HEK293 (cell line): ENCODE measurements at regions of chr17 and their contacts with region 1.

Region 1: DNA sequence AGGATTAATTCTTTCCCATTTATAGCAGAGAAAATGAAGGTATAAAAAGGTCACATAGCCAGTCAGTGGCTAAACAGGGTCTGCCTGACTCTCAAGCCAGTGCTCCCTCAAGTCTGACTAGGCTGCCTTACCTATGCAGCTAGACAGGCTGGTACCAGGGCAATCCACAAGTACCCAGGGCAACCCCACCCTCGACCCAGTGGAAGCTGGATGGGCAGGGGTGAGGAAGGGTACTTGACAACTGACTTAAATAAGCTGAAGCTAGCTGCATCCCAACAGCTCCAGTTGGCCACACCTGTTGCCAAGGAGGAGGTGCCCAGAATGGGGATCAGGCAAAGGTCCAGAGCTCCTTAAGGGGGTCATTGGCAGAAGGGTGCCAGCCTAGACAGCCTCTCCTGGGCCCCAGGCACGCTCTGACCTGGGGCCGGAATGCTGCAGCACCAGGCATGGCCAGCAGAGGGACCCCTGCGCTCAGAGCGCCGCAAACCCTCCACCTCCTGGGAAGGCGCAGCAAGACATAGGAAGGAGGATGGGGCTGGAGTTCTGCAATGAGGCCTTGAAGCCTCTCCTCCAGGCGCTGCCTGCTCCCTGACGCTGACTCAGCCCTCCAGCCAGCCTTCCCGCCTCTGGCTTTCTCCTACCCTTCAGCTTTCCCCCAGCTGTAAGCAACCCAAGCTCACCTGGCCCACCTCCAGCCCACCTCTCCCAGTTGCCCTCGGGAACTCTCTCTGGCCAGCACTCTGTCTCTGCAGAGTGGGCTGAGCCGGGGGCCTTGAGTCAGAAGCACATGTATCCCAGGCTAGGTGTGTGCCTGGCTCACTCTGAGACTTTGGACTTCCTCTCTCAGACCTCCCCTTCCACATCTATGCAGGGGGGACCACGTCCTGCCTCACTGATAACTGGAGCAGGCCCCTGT is 28.8 kb downstream of the MPP2 start:
- H3K4me3 ChIP-seq: no peak overlapping the region
- H3K27ac ChIP-seq: no peak overlapping the region
- H3K4me1 ChIP-seq: no peaks in the 10 kb centered on the region; the same call in 1 of the 2 replicates
- CTCF ChIP-seq: peak; percentile 98

Region 2: GRCh38 chr17:43861024-43861621 is 17.4 kb before region 1 on chr17:
- CTCF ChIA-PET with region 1: interaction called, 37 read pairs
- POLR2A ChIA-PET with region 1: interaction called, 3 read pairs
- H3K4me3 ChIP-seq: no peak overlapping the region
- H3K27ac ChIP-seq: no peak overlapping the region
- H3K4me1 ChIP-seq: no peaks in the 10 kb centered on the region
- CTCF ChIP-seq: no peak

Region 3: GRCh38 chr17:43900183-43900857 is 21.8 kb after region 1 on chr17:
- CTCF ChIA-PET with region 1: interaction called, 106 read pairs
- POLR2A ChIA-PET with region 1: interaction called, 3 read pairs
- H3K4me3 ChIP-seq: peak overlapping the region; percentile 48
- H3K27ac ChIP-seq: peak overlapping the region; percentile 47; the same call in 1 of the 2 replicates
- H3K4me1 ChIP-seq: peaks cover 11% of the 10 kb centered on the region; the same call in 1 of the 2 replicates
- CTCF ChIP-seq: no peak

Region 4: DNA sequence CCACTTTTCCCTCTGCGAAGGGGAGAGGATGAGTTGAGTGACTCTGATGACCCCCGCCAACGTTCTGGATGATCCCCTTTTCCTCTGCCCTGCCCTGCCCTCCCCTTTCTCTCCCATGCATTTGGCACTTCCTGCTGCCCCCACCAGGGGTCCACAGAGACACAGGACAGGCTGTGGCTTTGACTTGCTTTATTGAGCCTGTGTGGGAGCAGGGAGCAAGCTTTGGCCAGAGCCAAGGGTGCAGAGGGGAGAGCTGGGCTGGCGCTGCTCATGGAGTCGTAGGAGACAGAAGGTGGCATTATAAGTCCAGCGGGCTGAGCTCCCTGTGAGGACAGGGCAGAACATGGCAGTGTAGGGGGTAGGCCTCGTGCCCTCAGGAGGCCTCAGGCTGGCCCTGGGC is 62.1 kb after region 1 on chr17:
- CTCF ChIA-PET with region 1: interaction called, 56 read pairs
- POLR2A ChIA-PET with region 1: interaction called, 3 read pairs
- H3K4me3 ChIP-seq: no peak overlapping the region
- H3K27ac ChIP-seq: no peak overlapping the region
- H3K4me1 ChIP-seq: no peaks in the 10 kb centered on the region; the same call in 1 of the 2 replicates
- CTCF ChIP-seq: peak; percentile 68

Region 5: GRCh38 chr17:43994272-43995149 is 116.0 kb after region 1 on chr17:
- CTCF ChIA-PET with region 1: interaction called, 55 read pairs
- POLR2A ChIA-PET with region 1: no interaction called
- H3K4me3 ChIP-seq: peak overlapping the region; percentile 14
- H3K27ac ChIP-seq: no peak overlapping the region
- H3K4me1 ChIP-seq: no peaks in the 10 kb centered on the region
- CTCF ChIP-seq: peak; percentile 97